Left cardiac atrium (tissue), 4 donors: ENCODE measurements at regions of chr5 and their contacts with region 1.

Region 1: GRCh38 chr5:150700594-150701293 is at the start of gene RBM22:
- DNase-seq: peak; percentile 95
- ATAC-seq: peak; percentile 99 to 100
- total RNA-seq, gene RBM22: 27.2 to 28.2 TPM

Region 2: DNA sequence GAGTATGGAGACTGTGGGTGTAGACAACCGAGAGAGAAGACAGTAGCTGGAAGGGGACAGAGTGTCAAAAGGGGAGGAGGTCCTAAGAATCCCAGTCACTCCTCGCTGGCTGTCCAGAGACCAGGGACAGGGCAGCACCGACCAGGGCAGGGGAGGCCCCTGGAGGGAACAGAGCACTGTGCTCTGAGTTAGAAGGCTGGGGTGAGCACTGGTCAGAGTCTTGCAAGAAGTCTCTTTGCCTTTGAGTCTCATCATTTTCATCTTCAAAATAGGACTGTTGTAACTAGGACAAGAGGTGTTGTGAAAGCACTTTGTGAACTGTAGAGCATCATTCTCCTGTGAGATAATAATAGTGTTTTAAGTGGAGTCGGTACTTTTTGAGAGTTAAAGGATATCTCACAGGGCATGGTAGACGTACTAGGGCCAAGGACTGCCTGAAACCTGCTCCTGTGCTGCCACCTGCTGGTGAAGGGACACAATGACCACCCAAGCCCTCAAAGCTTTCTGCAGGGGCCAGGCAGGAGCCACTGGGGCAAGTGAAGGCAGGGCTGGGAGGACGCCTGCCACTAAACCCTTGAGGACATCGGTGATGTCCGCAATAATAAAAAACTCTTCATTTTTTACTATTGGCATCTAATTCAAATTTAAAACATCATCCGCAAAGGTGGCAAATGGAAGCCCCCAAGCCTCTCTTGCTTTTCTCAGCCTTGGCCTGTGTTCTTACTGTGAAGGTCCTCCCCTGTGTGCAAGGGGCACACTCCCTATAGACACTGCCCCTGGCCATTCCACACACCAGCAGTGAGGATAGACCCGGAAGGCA is 482.7 kb before region 1 on chr5:
- intact Hi-C with region 1: no loop called
- DNase-seq: peak; percentile 85
- ATAC-seq: peak; percentile 74 to 75

Region 3: DNA sequence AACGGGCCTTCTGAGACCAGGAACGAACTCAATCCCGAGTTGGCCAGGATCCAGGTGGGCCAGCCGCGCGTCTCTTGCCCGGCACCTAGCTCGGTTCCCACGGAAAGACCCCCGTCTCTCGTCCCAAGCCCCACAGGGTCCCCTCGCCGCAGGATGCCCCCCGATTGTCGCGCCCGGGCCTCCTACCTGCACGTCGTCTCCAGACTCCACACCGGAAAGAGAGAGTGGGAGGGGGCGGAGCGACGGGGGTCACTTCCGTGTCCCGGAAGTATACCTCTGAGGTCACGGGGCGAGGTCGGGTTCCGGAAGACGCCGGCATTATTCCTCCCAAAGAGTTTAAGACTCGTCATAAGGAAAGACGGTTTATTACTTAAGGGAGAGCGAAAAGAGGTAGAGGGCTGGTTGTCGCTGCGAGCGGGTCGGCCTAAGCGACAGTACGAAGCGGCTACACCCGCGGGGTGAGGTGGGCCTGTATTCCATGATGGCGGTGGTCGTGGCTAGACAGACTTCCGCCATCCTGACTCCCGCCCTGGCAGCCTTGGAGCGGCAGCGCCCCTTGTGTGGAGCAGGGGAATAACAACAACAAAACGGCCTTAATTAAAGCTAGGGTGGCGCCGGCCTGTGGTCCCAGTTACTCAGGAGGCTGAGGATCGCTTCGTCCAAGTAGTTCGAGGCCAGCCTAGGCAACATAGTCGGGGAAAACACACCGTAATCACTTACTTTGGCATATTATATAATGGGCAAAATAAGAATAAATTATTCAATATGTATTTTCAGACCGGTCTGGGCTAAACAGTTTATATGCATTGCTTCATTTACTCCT is 251.0 kb before region 1 on chr5 and contains the start of gene RPS14:
- intact Hi-C with region 1: loop called in 1 of 2 experiments (anchors 10 kb)
- DNase-seq: peak; percentile 96
- ATAC-seq: peak; percentile 97
- total RNA-seq, gene RPS14: 1,239 to 1,275 TPM

Region 4: GRCh38 chr5:150517272-150518152 is 183.2 kb before region 1 on chr5:
- intact Hi-C with region 1: no loop called
- DNase-seq: peak; percentile 63
- ATAC-seq: peak; percentile 29 to 36